ENCODE measurements at regions of chr2 and their contacts with region 1.

Region 1: GRCh38 chr2:22143840-22144239 is 1020.1 kb downstream of the TDRD15 start:
- DNase-seq: no peak
- ATAC-seq: no peak
- H3K4me3 ChIP-seq: no peak overlapping the region
- H3K27ac ChIP-seq: no peak overlapping the region
- H3K4me1 ChIP-seq: no peaks in the 10 kb centered on the region
- H3K27me3 ChIP-seq: no peaks in the 10 kb centered on the region
- CTCF ChIP-seq: no peak

Region 2: GRCh38 chr2:22110244-22110651 is 33.6 kb before region 1 on chr2:
- CTCF ChIA-PET with region 1: interaction called, 10 read pairs
- POLR2A ChIA-PET with region 1: no interaction called
- in situ Hi-C with region 1: no loop called
- intact Hi-C with region 1: no loop called
- DNase-seq: no peak
- ATAC-seq: no peak
- H3K4me3 ChIP-seq: no peak overlapping the region
- H3K27ac ChIP-seq: no peak overlapping the region
- H3K4me1 ChIP-seq: no peaks in the 10 kb centered on the region
- H3K27me3 ChIP-seq: no peaks in the 10 kb centered on the region
- CTCF ChIP-seq: no peak